BJ (cell line): ENCODE measurements at regions of chr13 and their contacts with region 1.

Region 1: GRCh38 chr13:99312493-99312883 is 5.3 kb upstream of the GPR183 start:
- DNase-seq: peak; percentile 60
- H3K4me3 ChIP-seq: no peak overlapping the region
- H3K27me3 ChIP-seq: no peaks in the 10 kb centered on the region
- CTCF ChIP-seq: no peak

Region 2: GRCh38 chr13:99327761-99328160 is 15.3 kb after region 1 on chr13:
- CTCF ChIA-PET with region 1: no interaction called
- POLR2A ChIA-PET with region 1: no interaction called
- DNase-seq: no peak
- H3K4me3 ChIP-seq: no peak overlapping the region
- H3K27me3 ChIP-seq: no peaks in the 10 kb centered on the region
- CTCF ChIP-seq: no peak

Region 3: DNA sequence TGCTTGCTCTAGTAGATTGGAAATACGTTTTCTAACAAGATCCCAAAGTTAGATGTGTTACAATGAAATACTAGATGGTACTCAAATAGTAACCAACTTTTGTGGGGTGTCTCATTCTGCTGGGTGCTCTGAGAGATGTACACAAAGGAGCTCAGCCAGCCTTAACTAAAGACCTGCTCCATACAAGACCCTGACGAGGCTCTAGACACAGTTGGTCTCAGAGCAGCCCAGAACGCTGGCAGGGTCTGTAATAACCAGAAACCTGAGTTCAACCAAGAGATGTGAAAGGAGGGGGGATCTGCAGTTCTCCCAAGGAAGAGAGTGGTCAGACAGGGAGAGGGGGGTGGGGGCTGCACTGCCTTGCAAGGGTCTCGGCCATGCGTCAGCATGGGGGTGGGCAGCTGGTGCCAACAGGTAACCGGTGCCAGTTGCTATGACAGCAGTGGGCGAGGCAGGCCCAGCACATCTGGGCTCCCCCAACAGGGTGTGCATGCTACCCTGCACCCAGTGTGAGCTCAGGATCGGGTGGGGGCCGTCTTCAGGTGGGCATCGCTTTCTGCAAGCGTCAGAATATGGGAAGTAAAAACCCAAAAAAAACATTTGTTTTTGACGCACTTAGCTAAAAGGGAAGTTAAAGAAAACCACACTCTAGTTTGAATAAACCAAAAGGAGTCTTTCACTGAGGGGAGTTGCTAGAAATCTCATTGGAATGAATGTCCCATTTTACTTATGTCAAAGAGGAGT is 62.7 kb after region 1 on chr13:
- CTCF ChIA-PET with region 1: no interaction called
- POLR2A ChIA-PET with region 1: interaction called, 14 read pairs
- DNase-seq: no peak
- H3K4me3 ChIP-seq: no peak overlapping the region
- H3K27me3 ChIP-seq: no peaks in the 10 kb centered on the region
- CTCF ChIP-seq: no peak